ENCODE measurements at regions of chr12 and their contacts with region 1.

Region 1: DNA sequence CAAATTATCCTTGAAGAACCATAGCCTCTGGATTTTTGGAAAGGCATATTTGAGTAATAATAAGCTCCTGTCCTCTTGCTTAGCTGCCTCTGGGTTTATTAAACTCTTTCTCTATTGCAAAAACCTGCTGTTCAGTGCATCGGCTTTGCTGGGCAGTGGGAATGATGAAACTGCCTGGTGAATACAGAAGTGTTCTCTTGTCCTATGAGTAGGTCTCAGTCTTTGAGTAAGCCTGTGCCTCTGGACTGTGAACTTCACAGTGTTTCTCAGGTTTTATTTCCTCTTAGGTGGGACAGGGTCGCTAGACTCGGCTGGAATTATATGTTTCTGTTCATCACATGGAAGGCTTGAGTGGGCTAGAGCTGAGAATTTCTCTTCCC is 46.4 kb downstream of the CRADD start:
- DNase-seq: no peak
- ATAC-seq: peak; percentile 45
- H3K4me3 ChIP-seq: peak overlapping the region; percentile 6; the same call in 1 of the 2 replicates
- H3K27ac ChIP-seq: peak overlapping the region; percentile 47
- H3K4me1 ChIP-seq: peaks cover 22% of the 10 kb centered on the region
- H3K27me3 ChIP-seq: no peaks in the 10 kb centered on the region
- CTCF ChIP-seq: no peak

Region 2: DNA sequence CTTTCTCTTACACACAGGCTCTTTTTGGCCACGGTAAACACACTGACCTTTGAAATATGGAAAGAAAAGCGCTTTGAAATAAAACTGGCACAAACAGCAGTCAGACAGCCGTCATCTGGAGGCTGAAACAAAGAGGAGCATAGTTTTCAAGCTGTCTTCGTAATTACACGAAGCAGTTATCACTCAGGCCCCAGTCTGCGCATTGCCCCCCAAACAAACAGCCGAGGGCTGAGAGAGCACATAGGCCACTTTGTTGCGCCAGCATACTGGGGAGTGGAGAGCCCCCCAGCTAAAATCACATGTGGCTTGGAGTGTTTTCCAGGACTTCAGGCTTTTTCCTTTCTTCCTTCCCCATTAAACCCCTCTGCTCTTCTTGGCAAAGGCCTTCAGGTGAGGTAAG is 1435.0 kb before region 1 on chr12:
- CTCF ChIA-PET with region 1: no interaction called
- POLR2A ChIA-PET with region 1: interaction called, 11 read pairs
- intact Hi-C with region 1: no loop called
- DNase-seq: no peak
- ATAC-seq: no peak
- H3K4me3 ChIP-seq: no peak overlapping the region
- H3K27ac ChIP-seq: no peak overlapping the region
- H3K4me1 ChIP-seq: peaks cover 31% of the 10 kb centered on the region
- H3K27me3 ChIP-seq: no peaks in the 10 kb centered on the region
- CTCF ChIP-seq: no peak

Region 3: DNA sequence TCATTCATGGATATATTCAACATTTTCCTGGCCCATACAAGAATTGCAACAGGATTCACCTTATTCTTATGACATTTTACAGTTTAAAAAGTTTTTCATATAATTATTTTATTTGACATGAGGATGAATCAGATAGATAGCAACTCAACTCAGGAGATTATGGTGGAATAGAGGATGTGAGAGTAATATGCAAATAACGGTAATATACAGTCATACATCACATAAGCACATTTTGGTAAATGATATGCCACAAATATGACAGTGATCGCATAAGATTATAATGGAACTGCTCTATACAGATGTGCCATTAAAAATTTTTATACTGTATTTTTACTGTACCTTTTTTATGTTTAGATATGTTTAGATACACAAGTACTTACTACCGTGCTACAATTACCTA is 70.5 kb before region 1 on chr12:
- CTCF ChIA-PET with region 1: no interaction called
- POLR2A ChIA-PET with region 1: no interaction called
- intact Hi-C with region 1: no loop called
- DNase-seq: no peak
- ATAC-seq: no peak
- H3K4me3 ChIP-seq: no peak overlapping the region
- H3K27ac ChIP-seq: no peak overlapping the region
- H3K4me1 ChIP-seq: no peaks in the 10 kb centered on the region
- H3K27me3 ChIP-seq: no peaks in the 10 kb centered on the region
- CTCF ChIP-seq: no peak